Posterior vena cava (tissue), 2 donors: ENCODE measurements at regions of chr12 and their contacts with region 1.

Region 1: DNA sequence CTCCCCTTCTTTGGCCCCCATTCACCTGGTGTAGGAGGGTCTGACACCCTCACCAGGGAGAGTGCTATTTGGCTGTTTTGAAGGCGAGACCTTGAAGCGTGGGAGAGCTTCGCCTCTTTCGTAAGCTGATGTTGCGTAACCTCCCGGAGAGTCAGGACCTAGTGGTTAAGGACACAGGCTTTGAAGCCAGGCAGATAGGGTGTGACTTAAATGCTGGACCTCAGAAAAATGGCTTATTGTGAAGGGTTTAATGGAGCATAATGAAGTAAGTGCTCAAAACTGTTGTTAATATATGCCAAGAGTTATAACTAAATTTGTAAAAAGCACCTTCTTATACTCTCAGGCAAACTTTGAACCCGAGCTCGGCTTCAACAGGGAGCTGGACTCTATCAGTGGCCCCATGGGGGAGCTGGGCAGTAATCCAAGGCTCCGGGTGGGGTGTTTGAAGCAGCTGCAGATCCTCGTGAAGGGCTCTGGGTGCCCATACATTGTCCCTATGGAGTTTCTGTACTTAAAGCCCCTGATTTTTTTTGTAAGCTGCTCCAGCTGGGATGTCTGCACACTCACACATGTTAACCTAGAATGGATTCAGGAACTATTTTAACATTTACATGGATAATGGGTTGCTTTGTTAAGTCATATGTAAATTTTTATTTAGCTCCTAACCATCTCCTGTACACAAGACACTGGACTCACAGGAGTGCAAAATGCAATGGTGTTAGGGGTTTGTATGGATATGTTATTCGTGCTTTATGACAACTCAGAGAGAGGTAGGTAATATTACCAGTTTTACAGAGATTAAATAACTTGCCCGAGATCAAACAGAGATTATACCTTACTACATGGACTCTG is 26.0 kb downstream of the PPFIBP1 start:
- DNase-seq: peak; percentile 85

Region 2: GRCh38 chr12:27627123-27627835 is 77.3 kb after region 1 on chr12:
- intact Hi-C with region 1: loop called in 1 of 2 experiments (anchors 10 kb)
- DNase-seq: no peak

Region 3: GRCh38 chr12:27751386-27752047 is 201.5 kb after region 1 on chr12:
- intact Hi-C with region 1: no loop called
- DNase-seq: no peak